B cell (primary cell): ENCODE measurements at regions of chr2 and their contacts with region 1.

Region 1: DNA sequence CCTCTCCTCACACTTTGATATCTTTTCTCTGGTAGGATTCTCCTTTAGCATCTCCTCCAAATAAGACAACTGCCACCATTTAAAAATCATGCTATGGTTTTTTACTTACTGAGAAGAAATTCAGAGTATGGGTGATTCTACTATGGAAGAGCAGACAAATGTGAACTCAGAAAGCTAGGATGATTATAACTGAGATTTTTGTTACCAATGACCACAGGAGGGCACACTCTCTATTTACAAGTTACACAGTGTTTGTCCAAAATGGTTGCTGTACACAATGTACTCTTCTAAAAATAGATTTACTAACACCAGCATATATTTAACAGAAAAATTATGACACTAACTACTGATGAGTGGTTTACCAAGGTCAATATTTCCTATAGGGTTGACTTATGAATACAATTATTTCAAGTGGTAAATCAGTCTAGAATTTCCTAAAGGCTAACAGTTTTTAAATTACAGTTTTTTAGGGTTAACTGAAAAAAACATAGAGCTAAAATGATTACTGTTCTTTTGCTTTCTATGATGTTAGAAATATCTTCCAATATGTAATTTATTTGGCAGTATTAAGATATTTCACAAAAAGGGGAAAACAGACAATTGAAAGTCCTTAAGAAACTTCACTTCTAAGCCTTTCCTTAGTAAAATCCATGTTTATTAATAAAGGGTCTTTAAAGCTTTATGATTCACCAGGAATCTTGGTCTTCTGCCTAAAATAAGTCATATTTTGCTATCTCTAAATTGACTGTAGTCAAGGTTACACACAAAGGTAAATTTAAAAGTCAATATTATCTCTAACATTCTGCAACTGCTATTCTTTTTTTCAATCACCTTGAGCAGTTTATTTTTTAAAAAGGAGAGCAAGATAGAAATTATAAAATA is 57.2 kb downstream of the MAP4K3 start:
- DNase-seq: peak; percentile 63
- ATAC-seq: peak; percentile 48
- H3K4me3 ChIP-seq: no peak overlapping the region
- H3K4me3 Mint-ChIP-seq: no peak overlapping the region
- H3K27ac ChIP-seq: no peak overlapping the region
- H3K27ac Mint-ChIP-seq: peak overlapping the region; percentile 56
- H3K4me1 ChIP-seq: peaks cover 9% of the 10 kb centered on the region in 2 donors
- H3K4me1 Mint-ChIP-seq: peaks cover 20% of the 10 kb centered on the region
- H3K27me3 ChIP-seq: no peaks in the 10 kb centered on the region
- H3K27me3 Mint-ChIP-seq: no peaks in the 10 kb centered on the region
- CTCF ChIP-seq: peak; percentile 76

Region 2: DNA sequence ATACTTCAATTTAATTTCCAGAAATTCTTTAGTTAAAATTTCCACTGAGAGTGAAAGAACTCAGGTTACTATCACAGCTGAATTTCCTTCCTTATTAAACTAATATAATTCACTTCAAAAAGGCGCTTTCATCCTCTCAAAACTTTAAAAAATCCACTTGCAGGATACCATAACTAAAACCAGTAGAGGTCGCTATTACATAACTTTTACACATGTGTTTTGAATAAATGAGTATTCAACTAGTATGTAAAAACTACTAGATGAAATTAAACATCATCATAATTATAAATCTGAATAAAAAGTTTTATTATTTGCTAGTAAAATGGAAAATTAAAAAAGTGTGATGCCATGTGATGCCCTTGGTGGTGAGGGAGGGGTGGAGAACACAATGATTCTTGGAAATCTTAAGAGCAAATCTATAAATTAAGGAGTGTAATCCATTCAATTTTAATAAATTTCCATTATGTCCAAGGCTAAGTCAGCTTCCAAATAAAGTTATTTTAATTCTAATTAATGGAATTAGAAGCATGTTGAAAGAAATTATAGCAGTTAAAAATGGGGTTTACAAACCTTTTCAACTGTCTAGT is 320.4 kb before region 1 on chr2:
- CTCF ChIA-PET with region 1: interaction called, 3 read pairs
- POLR2A ChIA-PET with region 1: no interaction called
- intact Hi-C with region 1: loop called (anchors 1 kb)
- DNase-seq: peak; percentile 65
- ATAC-seq: no peak
- H3K4me3 ChIP-seq: no peak overlapping the region
- H3K4me3 Mint-ChIP-seq: no peak overlapping the region
- H3K27ac ChIP-seq: no peak overlapping the region
- H3K27ac Mint-ChIP-seq: no peak overlapping the region
- H3K4me1 ChIP-seq: no peaks in the 10 kb centered on the region
- H3K4me1 Mint-ChIP-seq: no peaks in the 10 kb centered on the region
- H3K27me3 ChIP-seq: no peaks in the 10 kb centered on the region
- H3K27me3 Mint-ChIP-seq: no peaks in the 10 kb centered on the region
- CTCF ChIP-seq: peak; percentile 91

Region 3: GRCh38 chr2:39436592-39437510 is 57.0 kb after region 1 on chr2 and contains the start of gene MAP4K3:
- CTCF ChIA-PET with region 1: interaction called, 4 read pairs
- POLR2A ChIA-PET with region 1: interaction called, 3 read pairs
- intact Hi-C with region 1: loop called (anchors 5 kb)
- DNase-seq: peak; percentile 85
- ATAC-seq: peak; percentile 78
- H3K4me3 ChIP-seq: peak within 1 kb of the TSS; percentile 71 to 85 (median 80)
- H3K4me3 Mint-ChIP-seq: peak within 1 kb of the TSS; percentile 88
- H3K27ac ChIP-seq: peak within 1 kb of the TSS; percentile 3 to 78
- H3K27ac Mint-ChIP-seq: peak within 1 kb of the TSS; percentile 87
- H3K4me1 ChIP-seq: peaks cover 17% of the 10 kb centered on the region in 2 donors
- H3K4me1 Mint-ChIP-seq: peaks cover 29% of the 10 kb centered on the region
- H3K27me3 ChIP-seq: no peaks in the 10 kb centered on the region
- H3K27me3 Mint-ChIP-seq: no peaks in the 10 kb centered on the region
- CTCF ChIP-seq: no peak
- total RNA-seq, gene MAP4K3: 28.3 and 31.3 TPM in 2 replicates

Region 4: GRCh38 chr2:39476524-39476923 is 96.6 kb after region 1 on chr2:
- CTCF ChIA-PET with region 1: no interaction called
- POLR2A ChIA-PET with region 1: no interaction called
- intact Hi-C with region 1: loop called (anchors 5 kb)
- DNase-seq: peak; percentile 77
- ATAC-seq: peak; percentile 96
- H3K4me3 ChIP-seq: peak overlapping the region in 1 of 5 experiments; percentile 22
- H3K4me3 Mint-ChIP-seq: peak overlapping the region; percentile 75
- H3K27ac ChIP-seq: peak overlapping the region; percentile 37 to 72
- H3K27ac Mint-ChIP-seq: peak overlapping the region; percentile 91
- H3K4me1 ChIP-seq: peaks cover 16 to 20% of the 10 kb centered on the region in 2 donors
- H3K4me1 Mint-ChIP-seq: peaks cover 21% of the 10 kb centered on the region
- H3K27me3 ChIP-seq: no peaks in the 10 kb centered on the region
- H3K27me3 Mint-ChIP-seq: no peaks in the 10 kb centered on the region
- CTCF ChIP-seq: no peak

Region 5: GRCh38 chr2:39530411-39530866 is 150.6 kb after region 1 on chr2:
- CTCF ChIA-PET with region 1: interaction called, 8 read pairs
- POLR2A ChIA-PET with region 1: no interaction called
- intact Hi-C with region 1: loop called (anchors 1 kb)
- DNase-seq: no peak
- ATAC-seq: no peak
- H3K4me3 ChIP-seq: no peak overlapping the region
- H3K4me3 Mint-ChIP-seq: no peak overlapping the region
- H3K27ac ChIP-seq: no peak overlapping the region
- H3K27ac Mint-ChIP-seq: no peak overlapping the region
- H3K4me1 ChIP-seq: peaks cover 30 to 34% of the 10 kb centered on the region in 2 donors
- H3K4me1 Mint-ChIP-seq: peaks cover 46% of the 10 kb centered on the region
- H3K27me3 ChIP-seq: peaks cover 0 to 3% (median 0%) of the 10 kb centered on the region in 4 experiments
- H3K27me3 Mint-ChIP-seq: peaks cover 7% of the 10 kb centered on the region
- CTCF ChIP-seq: no peak

Region 6: DNA sequence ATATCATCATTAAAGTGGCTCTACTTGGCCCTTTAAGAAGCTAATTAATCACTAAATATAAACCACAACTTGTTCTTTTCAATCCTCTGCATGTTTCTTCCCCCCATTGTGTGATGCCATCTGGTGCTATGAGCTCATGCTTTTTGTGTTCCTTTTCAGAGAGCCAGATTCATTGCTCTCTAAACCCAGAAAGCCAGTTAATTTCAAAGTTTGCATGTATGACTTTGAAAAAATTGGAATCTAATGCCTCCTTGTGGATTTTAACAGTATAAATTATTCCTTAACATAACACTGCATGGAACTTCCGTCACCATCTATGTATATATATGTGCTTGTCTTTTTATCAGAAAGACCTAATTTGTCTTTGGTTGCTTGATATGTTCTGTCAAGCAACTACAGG is 317.0 kb after region 1 on chr2:
- CTCF ChIA-PET with region 1: interaction called, 10 read pairs
- POLR2A ChIA-PET with region 1: no interaction called
- intact Hi-C with region 1: loop called (anchors 1 kb)
- DNase-seq: no peak
- ATAC-seq: no peak
- H3K4me3 ChIP-seq: no peak overlapping the region
- H3K4me3 Mint-ChIP-seq: no peak overlapping the region
- H3K27ac ChIP-seq: no peak overlapping the region
- H3K27ac Mint-ChIP-seq: no peak overlapping the region
- H3K4me1 ChIP-seq: no peaks in the 10 kb centered on the region
- H3K4me1 Mint-ChIP-seq: no peaks in the 10 kb centered on the region
- H3K27me3 ChIP-seq: no peaks in the 10 kb centered on the region
- H3K27me3 Mint-ChIP-seq: peaks cover 17% of the 10 kb centered on the region
- CTCF ChIP-seq: peak; percentile 23

Region 7: DNA sequence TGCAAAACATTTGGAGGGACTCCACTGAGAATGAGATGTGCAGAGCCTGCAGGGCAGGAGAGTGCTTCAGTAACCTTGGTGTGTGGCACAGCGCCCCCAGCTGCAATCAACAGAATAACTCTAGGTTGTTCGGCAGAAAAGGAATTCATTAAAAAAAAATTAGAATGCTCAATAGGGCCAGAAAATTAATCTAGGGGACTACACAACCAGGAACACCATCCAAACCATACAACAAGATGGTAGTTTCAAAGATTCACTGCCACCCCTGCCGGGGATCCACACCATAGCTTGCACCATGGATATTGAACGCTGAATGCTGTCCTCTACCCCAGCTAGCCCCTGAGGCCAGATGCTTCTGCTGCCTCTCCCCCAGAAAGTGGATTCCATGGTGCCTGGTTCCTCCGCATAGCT is 349.1 kb after region 1 on chr2:
- CTCF ChIA-PET with region 1: interaction called, 162 read pairs
- POLR2A ChIA-PET with region 1: no interaction called
- intact Hi-C with region 1: loop called (anchors 1 kb)
- DNase-seq: peak; percentile 42
- ATAC-seq: peak; percentile 45
- H3K4me3 ChIP-seq: no peak overlapping the region
- H3K4me3 Mint-ChIP-seq: no peak overlapping the region
- H3K27ac ChIP-seq: no peak overlapping the region
- H3K27ac Mint-ChIP-seq: peak overlapping the region; percentile 38
- H3K4me1 ChIP-seq: peaks cover 0 to 14% of the 10 kb centered on the region in 2 donors
- H3K4me1 Mint-ChIP-seq: peaks cover 9% of the 10 kb centered on the region
- H3K27me3 ChIP-seq: no peaks in the 10 kb centered on the region
- H3K27me3 Mint-ChIP-seq: no peaks in the 10 kb centered on the region
- CTCF ChIP-seq: peak; percentile 79